ENCODE measurements at regions of chr11 and their contacts with region 1.

Region 1: GRCh38 chr11:108008656-108009496 is at the start of gene CUL5:
- DNase-seq: peak; percentile 91
- CTCF ChIP-seq: peak; percentile 97

Region 2: GRCh38 chr11:108664730-108665525 is 656.1 kb after region 1 on chr11 and contains the start of gene DDX10:
- in situ Hi-C with region 1: loop called (anchors 25 kb)
- DNase-seq: peak; percentile 97
- CTCF ChIP-seq: no peak